HepG2 (cell line): ENCODE measurements at regions of chr17 and their contacts with region 1.

Region 1: GRCh38 chr17:72445055-72445991 is 324.5 kb downstream of the SOX9 start:
- DNase-seq: peak; percentile 84
- ATAC-seq: peak; percentile 55
- H3K4me3 ChIP-seq: peak overlapping the region in 1 of 3 experiments; percentile 48; a peak in 2 of 6 replicates
- H3K27ac ChIP-seq: peak overlapping the region; percentile 96
- H3K4me1 ChIP-seq: peaks cover 97% of the 10 kb centered on the region
- H3K27me3 ChIP-seq: no peaks in the 10 kb centered on the region
- CTCF ChIP-seq: no peak; the same call in 1 of the 2 replicates
- EP300 ChIP-seq: peak in 1 of 2 experiments; percentile 92; a peak in 2 of 4 replicates
- POLR2A ChIP-seq: peak in 1 of 2 experiments; percentile 16; a peak in 1 of 4 replicates
- RAD21 ChIP-seq: no peak

Region 2: GRCh38 chr17:72407336-72407909 is 37.9 kb before region 1 on chr17:
- CTCF ChIA-PET with region 1: no interaction called
- POLR2A ChIA-PET with region 1: interaction called, 21 read pairs
- in situ Hi-C with region 1: no loop called
- intact Hi-C with region 1: loop called (anchors 5 kb)
- DNase-seq: no peak
- ATAC-seq: no peak
- H3K4me3 ChIP-seq: no peak overlapping the region
- H3K27ac ChIP-seq: peak overlapping the region; percentile 29
- H3K4me1 ChIP-seq: peaks cover 100% of the 10 kb centered on the region
- H3K27me3 ChIP-seq: no peaks in the 10 kb centered on the region
- CTCF ChIP-seq: no peak
- EP300 ChIP-seq: no peak
- POLR2A ChIP-seq: no peak
- RAD21 ChIP-seq: no peak

Region 3: GRCh38 chr17:72465191-72466024 is 20.1 kb after region 1 on chr17:
- CTCF ChIA-PET with region 1: no interaction called
- POLR2A ChIA-PET with region 1: interaction called, 60 read pairs
- in situ Hi-C with region 1: no loop called
- intact Hi-C with region 1: no loop called
- DNase-seq: peak; percentile 89
- ATAC-seq: peak; percentile 98
- H3K4me3 ChIP-seq: peak overlapping the region; percentile 7 to 64 (median 43); a peak in 5 of 6 replicates
- H3K27ac ChIP-seq: peak overlapping the region; percentile 70
- H3K4me1 ChIP-seq: peaks cover 98% of the 10 kb centered on the region
- H3K27me3 ChIP-seq: no peaks in the 10 kb centered on the region
- CTCF ChIP-seq: no peak
- EP300 ChIP-seq: peak; percentile 41 to 66; a peak in 2 of 4 replicates
- POLR2A ChIP-seq: peak in 1 of 2 experiments; percentile 48; a peak in 1 of 4 replicates
- RAD21 ChIP-seq: peak; percentile 12; the same call in 1 of the 2 replicates

Region 4: DNA sequence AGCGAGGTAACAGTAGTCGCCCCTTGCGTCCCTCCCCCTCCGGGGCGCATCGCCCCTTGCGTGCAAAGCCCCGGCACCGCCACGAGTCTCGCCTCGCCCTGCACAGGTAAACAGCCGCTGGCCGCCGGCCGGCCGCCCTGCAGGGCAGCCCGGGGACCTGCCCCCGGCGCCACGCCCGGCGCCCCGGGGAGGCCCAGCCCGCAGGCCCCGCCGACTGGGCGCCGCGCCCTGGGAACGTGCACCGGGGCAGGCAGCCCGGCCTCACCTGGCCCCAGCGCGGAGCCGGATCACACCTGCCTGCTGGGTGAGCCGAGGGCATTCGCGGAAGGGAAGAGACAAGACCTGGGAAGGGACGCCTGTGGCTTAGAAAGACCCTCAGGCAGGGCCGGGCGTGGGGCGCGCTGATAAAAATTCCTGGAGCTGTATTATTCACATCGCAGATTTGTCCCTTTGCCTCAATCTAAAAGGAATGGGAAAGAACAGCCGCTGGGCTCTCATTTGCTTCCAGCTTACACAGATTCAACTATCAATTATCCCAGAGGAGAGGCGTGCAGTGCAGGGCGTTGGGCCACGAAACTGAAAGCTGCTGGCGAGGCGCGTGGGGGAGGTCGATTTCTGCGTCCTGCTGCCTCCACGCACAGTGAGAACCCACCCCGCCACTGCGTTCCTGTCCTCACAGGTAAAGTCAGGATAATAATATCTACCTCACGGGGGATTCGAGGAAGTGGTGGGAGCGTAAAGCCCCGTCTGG is 195.3 kb after region 1 on chr17:
- CTCF ChIA-PET with region 1: no interaction called
- POLR2A ChIA-PET with region 1: no interaction called
- in situ Hi-C with region 1: no loop called
- intact Hi-C with region 1: no loop called
- DNase-seq: no peak
- ATAC-seq: no peak
- H3K4me3 ChIP-seq: no peak overlapping the region
- H3K27ac ChIP-seq: no peak overlapping the region
- H3K4me1 ChIP-seq: peaks cover 28% of the 10 kb centered on the region
- H3K27me3 ChIP-seq: no peaks in the 10 kb centered on the region
- CTCF ChIP-seq: no peak
- EP300 ChIP-seq: no peak
- POLR2A ChIP-seq: no peak
- RAD21 ChIP-seq: no peak